Mammary epithelial cell (primary cell): ENCODE measurements at regions of chr12 and their contacts with region 1.

Region 1: GRCh38 chr12:56117778-56118687 is at the start of gene ZC3H10:
- DNase-seq: peak; percentile 99
- H3K4me3 ChIP-seq: peak within 1 kb of the TSS; percentile 57 to 80 (median 77)
- H3K27ac ChIP-seq: peak within 1 kb of the TSS; percentile 91
- H3K4me1 ChIP-seq: peaks cover 31% of the 10 kb centered on the region
- H3K27me3 ChIP-seq: no peaks in the 10 kb centered on the region
- CTCF ChIP-seq: peak; percentile 23 to 65
- total RNA-seq, gene ZC3H10: 2.7 TPM

Region 2: DNA sequence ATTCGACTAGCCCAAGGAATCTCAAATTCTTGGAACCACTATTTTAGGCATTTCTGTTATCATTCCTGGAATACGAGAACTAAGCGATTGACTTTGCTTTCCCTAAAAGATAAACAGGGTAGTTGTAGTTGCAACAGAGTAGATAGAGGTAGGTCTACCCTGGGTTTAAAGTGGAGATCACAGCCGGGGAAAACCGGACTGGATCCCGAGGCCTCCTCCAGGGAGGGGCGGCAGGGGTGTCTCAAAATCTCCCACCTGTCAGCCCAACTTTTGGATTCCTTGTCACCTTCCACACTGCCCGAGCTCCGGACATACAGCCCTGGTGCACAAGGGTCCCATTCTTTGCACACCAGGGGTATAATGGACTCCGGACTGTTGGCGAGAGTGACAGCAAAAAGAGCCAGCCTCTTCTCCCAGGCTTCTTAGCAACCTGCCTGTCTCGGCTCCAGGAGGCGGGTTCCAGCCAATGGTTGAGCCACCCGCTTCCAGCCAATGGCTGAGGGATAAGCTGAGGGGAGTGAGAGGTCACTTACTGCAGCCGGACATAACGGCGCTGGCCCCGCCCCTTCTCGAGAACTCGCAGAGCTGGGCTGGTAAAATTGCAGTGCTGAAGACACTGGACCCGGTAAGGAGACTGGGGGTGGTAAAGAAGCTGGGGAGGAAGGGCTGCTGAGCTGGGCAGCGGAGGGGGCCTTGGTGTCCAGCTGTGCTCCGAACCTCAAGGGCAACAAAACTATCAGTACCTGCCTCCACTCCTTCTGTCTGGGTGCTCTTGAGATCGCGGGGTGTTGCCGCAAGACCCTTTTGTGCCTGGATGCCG is 121.1 kb before region 1 on chr12 and contains the start of gene SUOX:
- CTCF ChIA-PET with region 1: no interaction called
- dilution Hi-C with region 1: no loop called
- in situ Hi-C with region 1: no loop called
- intact Hi-C with region 1: loop called (anchors 2 kb)
- DNase-seq: peak; percentile 96
- H3K4me3 ChIP-seq: peak within 1 kb of the TSS; percentile 67 to 82 (median 75)
- H3K27ac ChIP-seq: peak within 1 kb of the TSS; percentile 63
- H3K4me1 ChIP-seq: peaks cover 11% of the 10 kb centered on the region
- H3K27me3 ChIP-seq: no peaks in the 10 kb centered on the region
- CTCF ChIP-seq: no peak
- total RNA-seq, gene SUOX: 10.7 to 14.7 TPM

Region 3: DNA sequence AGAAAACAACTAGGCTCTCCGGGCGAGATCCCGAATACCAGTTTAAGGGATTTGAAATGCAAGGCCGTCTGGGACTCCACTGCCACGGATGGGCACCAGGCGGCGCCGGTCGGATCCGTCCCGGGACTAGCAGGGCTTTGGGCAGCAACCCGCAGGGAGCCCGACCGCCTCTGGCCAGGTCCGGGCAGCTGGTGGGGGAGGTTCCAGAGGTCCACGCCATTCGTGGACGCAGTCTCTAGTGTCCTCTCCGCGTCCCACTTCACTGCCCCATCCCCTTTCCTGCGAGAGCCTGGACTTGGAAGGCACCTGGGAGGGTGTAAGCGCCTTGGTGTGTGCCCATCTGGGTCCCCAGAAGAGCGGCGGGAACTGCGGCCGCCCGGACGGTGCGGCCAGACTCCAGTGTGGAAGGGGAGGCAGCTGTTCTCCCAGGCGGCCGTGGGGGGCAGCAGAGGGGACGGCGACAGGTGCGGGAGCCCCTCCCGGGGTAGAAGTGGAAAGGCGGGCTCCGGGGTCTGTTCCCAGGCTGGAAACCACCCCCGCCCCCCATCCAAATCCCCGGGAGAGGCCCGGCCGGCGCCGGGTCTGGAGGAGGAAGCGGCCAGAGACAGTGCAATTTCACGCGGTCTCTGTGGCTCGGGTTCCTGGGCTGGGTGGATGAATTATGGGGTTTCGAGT is 38.9 kb before region 1 on chr12:
- CTCF ChIA-PET with region 1: no interaction called
- dilution Hi-C with region 1: no loop called
- in situ Hi-C with region 1: no loop called
- intact Hi-C with region 1: loop called (anchors 1 kb)
- DNase-seq: peak; percentile 81
- H3K4me3 ChIP-seq: peak overlapping the region; percentile 55 to 82 (median 73)
- H3K27ac ChIP-seq: peak overlapping the region; percentile 65
- H3K4me1 ChIP-seq: peaks cover 16% of the 10 kb centered on the region
- H3K27me3 ChIP-seq: no peaks in the 10 kb centered on the region
- CTCF ChIP-seq: peak; percentile 77 to 92

Region 4: DNA sequence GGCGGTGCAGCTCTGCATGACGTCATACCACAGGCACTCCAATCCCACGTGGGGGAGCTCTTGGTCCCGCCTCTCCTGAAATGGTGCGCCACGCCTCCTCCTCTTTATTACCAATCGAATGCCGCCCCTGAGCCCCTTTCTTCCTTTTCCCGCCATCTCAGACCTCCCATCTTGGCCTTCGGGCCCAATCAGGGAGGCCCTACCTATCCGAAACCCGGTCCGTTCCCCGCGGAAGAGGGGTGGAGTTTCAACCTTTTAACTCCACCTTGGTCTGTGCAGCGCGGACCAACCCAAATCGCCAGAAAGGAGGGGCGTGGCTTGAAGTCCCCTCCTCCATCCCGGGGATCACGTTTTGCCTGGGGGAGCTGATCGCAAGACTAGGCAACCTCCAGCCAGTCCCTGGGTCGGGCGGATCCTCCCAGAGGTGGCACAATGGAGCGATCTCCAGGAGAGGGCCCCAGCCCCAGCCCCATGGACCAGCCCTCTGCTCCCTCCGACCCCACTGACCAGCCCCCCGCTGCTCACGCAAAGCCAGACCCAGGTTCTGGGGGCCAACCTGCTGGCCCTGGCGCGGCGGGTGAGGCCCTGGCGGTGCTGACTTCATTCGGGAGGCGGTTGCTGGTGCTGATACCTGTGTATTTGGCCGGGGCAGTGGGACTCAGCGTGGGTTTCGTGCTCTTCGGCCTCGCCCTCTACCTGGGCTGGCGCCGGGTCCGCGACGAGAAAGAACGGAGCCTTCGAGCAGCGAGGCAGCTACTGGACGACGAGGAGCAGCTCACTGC is 10.0 kb after region 1 on chr12 and contains the start of gene ESYT1:
- CTCF ChIA-PET with region 1: no interaction called
- dilution Hi-C with region 1: no loop called
- in situ Hi-C with region 1: no loop called
- intact Hi-C with region 1: loop called (anchors 1 kb)
- DNase-seq: peak; percentile 100
- H3K4me3 ChIP-seq: peak within 1 kb of the TSS; percentile 74 to 86 (median 81)
- H3K27ac ChIP-seq: peak within 1 kb of the TSS; percentile 82
- H3K4me1 ChIP-seq: peaks cover 18% of the 10 kb centered on the region
- H3K27me3 ChIP-seq: no peaks in the 10 kb centered on the region
- CTCF ChIP-seq: no peak
- total RNA-seq, gene ESYT1: 166 to 366 TPM

Region 5: GRCh38 chr12:56165369-56165768 is 47.3 kb after region 1 on chr12:
- CTCF ChIA-PET with region 1: no interaction called
- dilution Hi-C with region 1: loop called (anchors 5 kb)
- in situ Hi-C with region 1: no loop called
- intact Hi-C with region 1: no loop called
- DNase-seq: no peak
- H3K4me3 ChIP-seq: no peak overlapping the region
- H3K27ac ChIP-seq: no peak overlapping the region
- H3K4me1 ChIP-seq: peaks cover 9% of the 10 kb centered on the region
- H3K27me3 ChIP-seq: no peaks in the 10 kb centered on the region
- CTCF ChIP-seq: no peak

Region 6: DNA sequence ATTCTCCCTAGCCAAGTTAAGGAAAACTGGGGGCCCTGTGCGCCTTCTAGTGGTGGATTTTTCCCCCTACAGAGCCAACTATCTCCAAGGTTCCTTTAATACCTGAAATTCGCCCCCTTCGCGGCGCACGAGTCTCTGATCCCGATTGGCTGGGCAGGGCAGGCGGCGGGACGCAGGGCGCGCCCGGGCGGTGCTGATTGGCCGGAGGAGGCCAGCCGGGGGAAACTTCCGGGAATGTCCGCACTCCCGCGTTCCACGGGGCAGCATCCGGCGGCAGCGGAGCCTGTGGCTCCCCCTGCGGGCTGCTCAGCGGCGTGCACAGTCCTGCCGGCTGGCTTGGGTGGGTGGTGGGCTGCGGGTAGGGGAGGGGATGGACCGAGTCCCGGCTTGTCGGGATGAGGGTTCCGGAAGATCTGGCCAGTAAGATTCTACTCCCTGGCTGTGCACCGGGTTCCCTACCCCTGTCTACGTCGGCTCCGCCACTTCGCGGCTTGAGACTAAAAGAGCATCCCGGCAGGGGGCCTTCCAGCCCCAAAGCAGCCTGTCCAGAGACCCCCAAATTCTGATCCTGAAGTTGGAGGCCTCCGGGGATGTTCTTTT is 106.2 kb after region 1 on chr12 and contains the start of gene NABP2:
- CTCF ChIA-PET with region 1: no interaction called
- dilution Hi-C with region 1: loop called (anchors 5 kb)
- in situ Hi-C with region 1: no loop called
- intact Hi-C with region 1: loop called (anchors 1 kb)
- DNase-seq: peak; percentile 98
- H3K4me3 ChIP-seq: peak within 1 kb of the TSS; percentile 69 to 72 (median 70)
- H3K27ac ChIP-seq: peak within 1 kb of the TSS; percentile 30
- H3K4me1 ChIP-seq: peaks cover 21% of the 10 kb centered on the region
- H3K27me3 ChIP-seq: no peaks in the 10 kb centered on the region
- CTCF ChIP-seq: peak; percentile 65 to 82
- total RNA-seq, gene NABP2: 18.3 to 37.5 TPM

Region 7: GRCh38 chr12:56299853-56300643 is 182.0 kb after region 1 on chr12 and contains the start of gene CS:
- CTCF ChIA-PET with region 1: no interaction called
- dilution Hi-C with region 1: no loop called
- in situ Hi-C with region 1: no loop called
- intact Hi-C with region 1: no loop called
- DNase-seq: peak; percentile 98
- H3K4me3 ChIP-seq: peak within 1 kb of the TSS; percentile 82 to 99 (median 93)
- H3K27ac ChIP-seq: peak within 1 kb of the TSS; percentile 88
- H3K4me1 ChIP-seq: peaks cover 13% of the 10 kb centered on the region
- H3K27me3 ChIP-seq: no peaks in the 10 kb centered on the region
- CTCF ChIP-seq: no peak
- total RNA-seq, gene CS: 81.4 to 169 TPM

Region 8: GRCh38 chr12:56359851-56360767 is 242.1 kb after region 1 on chr12 and contains the start of gene STAT2:
- CTCF ChIA-PET with region 1: no interaction called
- dilution Hi-C with region 1: no loop called
- in situ Hi-C with region 1: no loop called
- intact Hi-C with region 1: loop called (anchors 2 kb)
- DNase-seq: peak; percentile 100
- H3K4me3 ChIP-seq: peak within 1 kb of the TSS; percentile 71 to 85 (median 83)
- H3K27ac ChIP-seq: peak within 1 kb of the TSS; percentile 95
- H3K4me1 ChIP-seq: peaks cover 12% of the 10 kb centered on the region
- H3K27me3 ChIP-seq: no peaks in the 10 kb centered on the region
- CTCF ChIP-seq: no peak
- total RNA-seq, gene STAT2: 93.1 to 231 TPM